Heart left ventricle (tissue), 16 donors: ENCODE measurements at regions of chr12 and their contacts with region 1.

Region 1: DNA sequence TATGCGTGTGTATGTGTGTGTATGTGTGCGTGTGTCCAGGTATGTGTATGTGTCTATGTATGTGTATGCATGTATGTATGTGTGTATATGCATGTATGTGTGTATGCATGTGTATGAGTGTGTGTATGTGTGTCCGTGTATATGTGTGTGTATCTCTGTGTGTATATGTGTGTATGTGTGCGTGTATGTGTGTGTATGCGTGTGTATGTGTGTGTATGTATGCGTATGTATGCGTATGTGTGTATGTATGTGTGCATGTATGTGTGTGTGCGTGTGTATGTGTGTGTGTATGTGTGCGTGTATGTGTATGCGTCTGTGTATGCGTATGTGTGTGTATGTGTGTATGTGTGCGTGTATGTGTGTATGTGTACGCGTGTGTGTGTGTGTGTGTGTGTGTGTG is 31.6 kb downstream of the CHST11 start:
- DNase-seq: no peak
- ATAC-seq: no peak
- H3K4me3 ChIP-seq: no peak overlapping the region
- H3K27ac ChIP-seq: no peak overlapping the region
- H3K4me1 ChIP-seq: peaks cover 0 to 78% (median 9%) of the 10 kb centered on the region in 12 donors
- H3K27me3 ChIP-seq: no peaks in the 10 kb centered on the region
- CTCF ChIP-seq: no peak
- POLR2A ChIP-seq: no peak

Region 2: DNA sequence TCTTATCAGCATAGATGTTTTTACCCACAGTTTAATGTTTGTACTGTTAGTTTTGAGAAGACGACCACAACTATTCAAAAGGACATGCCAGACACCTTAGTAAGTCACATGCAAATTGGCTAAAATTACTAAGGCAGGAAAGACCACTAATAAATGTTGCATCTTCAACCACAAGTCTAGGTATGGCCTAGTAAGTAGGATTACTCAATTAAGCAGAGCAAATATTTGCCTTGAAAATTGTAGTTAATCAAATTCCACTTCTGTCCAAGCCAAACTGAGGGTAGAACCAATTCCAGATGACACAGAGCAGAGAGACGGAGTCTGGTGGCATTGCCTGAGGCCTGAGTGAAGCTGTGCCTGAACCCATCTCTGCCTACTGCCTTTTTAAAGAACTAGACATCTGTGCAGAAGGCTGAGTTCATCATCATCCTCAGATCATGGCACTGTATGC is 61.3 kb before region 1 on chr12:
- intact Hi-C with region 1: no loop called
- DNase-seq: no peak
- ATAC-seq: no peak
- H3K4me3 ChIP-seq: no peak overlapping the region
- H3K27ac ChIP-seq: no peak overlapping the region
- H3K4me1 ChIP-seq: no peaks in the 10 kb centered on the region
- H3K27me3 ChIP-seq: no peaks in the 10 kb centered on the region
- CTCF ChIP-seq: no peak
- POLR2A ChIP-seq: no peak

Region 3: DNA sequence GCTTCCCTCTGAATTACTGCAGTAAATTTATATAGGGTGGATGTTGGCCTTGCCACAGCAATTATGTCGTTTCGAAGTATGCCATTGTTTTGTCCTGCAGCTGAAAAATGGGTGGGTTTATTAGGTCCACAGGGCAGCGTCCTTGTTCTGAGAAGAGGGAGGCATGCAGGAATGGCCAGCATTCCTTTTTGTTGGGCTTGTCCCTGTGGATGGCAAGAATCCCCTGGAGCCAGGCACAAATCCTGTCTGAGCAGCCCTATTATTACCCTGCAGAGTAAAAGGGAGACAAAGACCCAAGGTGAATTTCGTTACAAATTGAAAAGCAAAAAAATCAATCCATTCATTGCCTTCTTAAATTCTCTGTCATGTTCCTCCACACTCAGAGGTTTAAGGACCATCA is 56.5 kb after region 1 on chr12:
- intact Hi-C with region 1: loop called in 1 of 10 experiments (anchors 2 kb)
- DNase-seq: no peak
- ATAC-seq: no peak
- H3K4me3 ChIP-seq: no peak overlapping the region
- H3K27ac ChIP-seq: no peak overlapping the region
- H3K4me1 ChIP-seq: peaks cover 0 to 28% (median 0%) of the 10 kb centered on the region in 12 donors
- H3K27me3 ChIP-seq: no peaks in the 10 kb centered on the region
- CTCF ChIP-seq: no peak
- POLR2A ChIP-seq: no peak

Region 4: GRCh38 chr12:105013892-105014291 is 525.5 kb after region 1 on chr12:
- intact Hi-C with region 1: no loop called
- DNase-seq: no peak
- ATAC-seq: no peak
- H3K4me3 ChIP-seq: no peak overlapping the region
- H3K27ac ChIP-seq: no peak overlapping the region
- H3K4me1 ChIP-seq: no peaks in the 10 kb centered on the region
- H3K27me3 ChIP-seq: no peaks in the 10 kb centered on the region
- CTCF ChIP-seq: no peak
- POLR2A ChIP-seq: no peak